Caco-2 (cell line): ENCODE measurements at regions of chr17 and their contacts with region 1.

Region 1: DNA sequence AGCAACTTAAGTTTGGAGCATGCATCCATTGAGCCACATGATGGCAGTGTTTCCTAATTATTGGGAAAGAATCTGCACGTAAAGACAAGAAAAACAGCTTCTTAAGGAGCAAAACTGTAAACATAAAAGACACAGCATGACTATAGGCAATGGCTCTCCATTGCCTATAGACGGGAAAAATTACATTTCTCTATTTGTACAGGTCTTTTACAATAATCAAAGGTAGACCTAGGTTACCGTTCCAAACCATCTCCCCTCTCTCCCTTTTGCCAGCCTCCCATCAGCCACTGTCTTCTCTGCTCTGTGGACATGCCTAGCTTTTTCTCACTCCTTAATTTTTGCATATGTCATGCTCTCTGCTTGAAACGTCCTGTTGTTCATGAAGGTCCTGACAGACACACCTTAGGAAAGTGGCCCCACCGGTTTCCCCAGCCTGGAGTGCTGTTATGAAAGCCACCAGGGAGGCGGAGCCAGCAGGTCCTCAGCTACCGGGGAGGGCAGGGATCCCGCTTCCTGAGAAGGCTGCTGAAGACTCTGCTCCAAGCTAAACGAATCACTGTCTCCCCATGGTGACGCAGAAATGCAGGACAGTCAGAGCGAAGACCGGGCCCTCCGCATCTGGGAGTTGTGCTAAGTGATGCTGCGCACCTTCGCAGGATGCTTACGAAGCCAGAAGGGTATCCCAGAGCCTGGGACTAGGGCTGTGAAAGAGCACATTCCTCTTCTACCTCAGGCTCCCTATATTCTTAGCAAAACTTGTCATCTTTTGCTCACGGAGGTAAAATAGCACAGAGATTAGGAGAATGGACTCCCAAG is 2.2 kb upstream of the SLC16A11 start:
- DNase-seq: peak; percentile 85 to 91
- H3K4me3 ChIP-seq: peak overlapping the region; percentile 30
- H3K4me3 Mint-ChIP-seq: peak overlapping the region; percentile 72
- H3K27ac Mint-ChIP-seq: peak overlapping the region; percentile 95
- H3K4me1 ChIP-seq: peaks cover 8% of the 10 kb centered on the region; the same call in 1 of the 2 replicates
- H3K4me1 Mint-ChIP-seq: peaks cover 7% of the 10 kb centered on the region
- H3K27me3 ChIP-seq: no peaks in the 10 kb centered on the region
- H3K27me3 Mint-ChIP-seq: no peaks in the 10 kb centered on the region
- CTCF ChIP-seq: peak; percentile 54 to 55

Region 2: GRCh38 chr17:7035591-7036368 is 10.3 kb before region 1 on chr17 and contains the start of gene SLC16A13:
- CTCF ChIA-PET with region 1: interaction called, 16 read pairs
- POLR2A ChIA-PET with region 1: interaction called, 8 read pairs
- intact Hi-C with region 1: no loop called
- DNase-seq: peak; percentile 91 to 93
- H3K4me3 ChIP-seq: peak within 1 kb of the TSS; percentile 47
- H3K4me3 Mint-ChIP-seq: peak within 1 kb of the TSS; percentile 88
- H3K27ac Mint-ChIP-seq: peak within 1 kb of the TSS; percentile 86
- H3K4me1 ChIP-seq: no peaks in the 10 kb centered on the region
- H3K4me1 Mint-ChIP-seq: peaks cover 7% of the 10 kb centered on the region
- H3K27me3 ChIP-seq: no peaks in the 10 kb centered on the region
- H3K27me3 Mint-ChIP-seq: no peaks in the 10 kb centered on the region
- CTCF ChIP-seq: no peak
- total RNA-seq, gene SLC16A13: 7.1 and 8.7 TPM in 2 replicates

Region 3: DNA sequence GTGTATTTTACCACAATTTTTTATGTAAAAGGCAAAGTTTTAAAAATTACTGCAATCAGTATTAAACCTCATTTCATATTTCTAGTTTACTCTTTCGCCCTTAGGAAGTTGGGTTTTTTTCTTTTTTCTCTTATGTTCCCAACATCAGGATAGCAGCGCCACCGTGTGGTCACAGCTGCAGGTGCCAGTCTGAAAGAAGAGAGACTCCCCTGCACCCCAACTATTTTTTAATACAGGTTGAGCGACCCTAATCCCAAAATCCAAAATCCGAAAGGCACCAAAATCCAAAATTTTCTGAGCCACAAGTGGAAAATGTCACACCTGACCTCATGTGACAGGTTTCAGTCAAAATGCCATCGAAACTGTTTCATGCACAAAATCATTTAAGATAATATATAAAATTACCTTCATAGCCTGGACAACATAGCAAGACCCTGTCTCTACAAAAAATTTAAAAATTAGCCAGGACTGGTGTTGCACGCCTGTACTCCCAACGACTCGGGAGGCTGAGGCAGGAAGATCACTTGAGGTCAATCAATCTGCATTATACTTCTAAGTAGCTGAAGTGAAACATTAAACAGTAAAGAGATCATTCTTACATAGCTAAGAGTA is 90.3 kb after region 1 on chr17:
- CTCF ChIA-PET with region 1: interaction called, 16 read pairs
- POLR2A ChIA-PET with region 1: no interaction called
- intact Hi-C with region 1: loop called (anchors 1 kb)
- DNase-seq: peak; percentile 54 to 59
- H3K4me3 ChIP-seq: peak overlapping the region; percentile 17
- H3K4me3 Mint-ChIP-seq: peak overlapping the region; percentile 63
- H3K27ac Mint-ChIP-seq: no peak overlapping the region
- H3K4me1 ChIP-seq: peaks cover 3% of the 10 kb centered on the region
- H3K4me1 Mint-ChIP-seq: peaks cover 4% of the 10 kb centered on the region
- H3K27me3 ChIP-seq: no peaks in the 10 kb centered on the region
- H3K27me3 Mint-ChIP-seq: no peaks in the 10 kb centered on the region
- CTCF ChIP-seq: peak; percentile 60 to 70

Region 4: GRCh38 chr17:7167832-7168231 is 121.7 kb after region 1 on chr17:
- CTCF ChIA-PET with region 1: interaction called, 30 read pairs
- POLR2A ChIA-PET with region 1: interaction called, 3 read pairs
- intact Hi-C with region 1: no loop called
- DNase-seq: no peak
- H3K4me3 ChIP-seq: no peak overlapping the region
- H3K4me3 Mint-ChIP-seq: no peak overlapping the region
- H3K27ac Mint-ChIP-seq: no peak overlapping the region
- H3K4me1 ChIP-seq: no peaks in the 10 kb centered on the region
- H3K4me1 Mint-ChIP-seq: no peaks in the 10 kb centered on the region
- H3K27me3 ChIP-seq: no peaks in the 10 kb centered on the region
- H3K27me3 Mint-ChIP-seq: no peaks in the 10 kb centered on the region
- CTCF ChIP-seq: no peak

Region 5: DNA sequence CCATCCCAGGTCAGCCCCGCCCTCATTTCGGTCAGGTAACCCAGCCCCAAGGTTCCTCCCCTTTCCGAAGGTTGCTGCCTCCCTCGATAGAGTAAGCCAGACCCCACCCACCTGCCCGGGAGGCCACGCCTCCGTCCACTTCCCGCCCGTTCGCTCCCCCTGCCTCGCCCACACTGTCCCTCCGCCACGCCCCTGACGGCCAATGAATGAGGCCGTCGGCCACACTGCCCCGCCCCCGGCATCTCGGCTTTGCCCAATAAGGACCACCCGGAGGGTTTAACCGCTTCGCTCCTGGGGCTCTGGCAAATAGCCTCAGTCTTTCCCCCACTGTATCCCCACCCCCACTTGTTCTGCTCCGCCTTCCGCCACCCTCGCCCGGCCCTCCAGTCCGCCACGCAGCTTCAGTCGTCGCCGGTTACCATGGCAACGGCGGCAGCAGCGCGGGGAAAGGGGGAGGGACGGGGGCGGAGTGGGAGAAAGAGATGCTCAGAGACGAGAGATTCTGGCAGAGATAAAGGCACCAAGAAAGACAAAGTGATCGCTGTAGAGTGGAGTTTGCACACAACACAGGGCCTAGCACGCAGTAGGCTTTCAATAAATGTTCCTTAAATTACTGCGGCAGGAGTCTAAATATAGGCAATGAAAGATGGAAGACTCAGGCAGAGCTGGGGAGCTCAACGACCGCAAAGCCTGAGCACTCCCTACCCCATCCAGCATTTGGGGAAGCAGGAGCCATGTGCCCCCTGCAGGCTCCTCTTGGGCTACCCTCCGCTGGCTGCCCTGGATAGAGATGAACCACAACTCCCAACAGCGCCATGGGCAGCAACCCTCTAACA is 168.4 kb after region 1 on chr17:
- CTCF ChIA-PET with region 1: interaction called, 13 read pairs
- POLR2A ChIA-PET with region 1: interaction called, 3 read pairs
- intact Hi-C with region 1: no loop called
- DNase-seq: peak; percentile 96 to 97
- H3K4me3 ChIP-seq: peak overlapping the region; percentile 36
- H3K4me3 Mint-ChIP-seq: peak overlapping the region; percentile 80
- H3K27ac Mint-ChIP-seq: peak overlapping the region; percentile 98
- H3K4me1 ChIP-seq: peaks cover 4% of the 10 kb centered on the region; the same call in 1 of the 2 replicates
- H3K4me1 Mint-ChIP-seq: peaks cover 3% of the 10 kb centered on the region
- H3K27me3 ChIP-seq: no peaks in the 10 kb centered on the region
- H3K27me3 Mint-ChIP-seq: no peaks in the 10 kb centered on the region
- CTCF ChIP-seq: peak; percentile 19 to 40